PC-9 (cell line): ENCODE measurements at regions of chr9 and their contacts with region 1.

Region 1: GRCh38 chr9:5186416-5187169 is 1.2 kb upstream of the INSL6 start:
- DNase-seq: peak; percentile 44 to 46
- H3K4me3 ChIP-seq: no peak overlapping the region
- H3K27ac ChIP-seq: no peak overlapping the region
- H3K4me1 ChIP-seq: no peaks in the 10 kb centered on the region
- H3K27me3 ChIP-seq: no peaks in the 10 kb centered on the region
- CTCF ChIP-seq: peak; percentile 71

Region 2: DNA sequence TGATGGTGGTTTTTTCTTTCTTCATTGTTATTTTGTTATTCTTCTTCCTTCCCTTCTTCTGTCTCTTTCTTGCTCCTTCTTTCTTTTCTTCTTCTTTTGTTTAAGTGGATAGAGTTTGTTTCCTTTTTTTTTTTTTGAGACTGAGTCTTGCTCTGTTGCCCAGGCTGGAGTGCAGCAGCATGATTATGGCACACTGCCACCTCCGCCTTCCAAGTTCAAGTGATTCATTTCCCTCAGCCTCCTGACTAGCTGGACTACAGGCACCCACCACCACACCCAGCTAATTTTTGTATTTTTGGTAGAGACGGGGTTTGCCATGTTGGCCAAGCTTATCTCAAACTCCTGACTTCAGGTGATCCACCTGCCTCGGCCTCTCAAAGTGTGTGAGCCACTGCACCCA is 161.2 kb before region 1 on chr9:
- CTCF ChIA-PET with region 1: no interaction called
- POLR2A ChIA-PET with region 1: no interaction called
- intact Hi-C with region 1: no loop called
- DNase-seq: no peak
- H3K4me3 ChIP-seq: no peak overlapping the region
- H3K27ac ChIP-seq: no peak overlapping the region
- H3K4me1 ChIP-seq: no peaks in the 10 kb centered on the region
- H3K27me3 ChIP-seq: no peaks in the 10 kb centered on the region
- CTCF ChIP-seq: no peak

Region 3: GRCh38 chr9:5425006-5425628 is 238.5 kb after region 1 on chr9:
- CTCF ChIA-PET with region 1: no interaction called
- POLR2A ChIA-PET with region 1: no interaction called
- intact Hi-C with region 1: loop called (anchors 1 kb)
- DNase-seq: no peak
- H3K4me3 ChIP-seq: no peak overlapping the region
- H3K27ac ChIP-seq: no peak overlapping the region
- H3K4me1 ChIP-seq: no peaks in the 10 kb centered on the region
- H3K27me3 ChIP-seq: no peaks in the 10 kb centered on the region
- CTCF ChIP-seq: peak; percentile 67

Region 4: GRCh38 chr9:5586391-5586802 is 399.8 kb after region 1 on chr9:
- CTCF ChIA-PET with region 1: no interaction called
- POLR2A ChIA-PET with region 1: no interaction called
- intact Hi-C with region 1: loop called (anchors 2 kb)
- DNase-seq: no peak
- H3K4me3 ChIP-seq: no peak overlapping the region
- H3K27ac ChIP-seq: no peak overlapping the region
- H3K4me1 ChIP-seq: peaks cover 14% of the 10 kb centered on the region
- H3K27me3 ChIP-seq: no peaks in the 10 kb centered on the region
- CTCF ChIP-seq: no peak